B cell (primary cell): ENCODE measurements at regions of chr14 and their contacts with region 1.

Region 1: GRCh38 chr14:71328183-71328582 is 420.9 kb downstream of the PCNX1 start:
- DNase-seq: peak; percentile 65
- ATAC-seq: peak; percentile 39
- H3K4me3 ChIP-seq: no peak overlapping the region
- H3K4me3 Mint-ChIP-seq: peak overlapping the region; percentile 38
- H3K27ac ChIP-seq: peak overlapping the region in 1 of 2 donors; percentile 35
- H3K27ac Mint-ChIP-seq: peak overlapping the region; percentile 8
- H3K4me1 ChIP-seq: peaks cover 60 to 69% of the 10 kb centered on the region in 2 donors
- H3K4me1 Mint-ChIP-seq: peaks cover 84% of the 10 kb centered on the region
- H3K27me3 ChIP-seq: no peaks in the 10 kb centered on the region
- H3K27me3 Mint-ChIP-seq: no peaks in the 10 kb centered on the region
- CTCF ChIP-seq: no peak

Region 2: DNA sequence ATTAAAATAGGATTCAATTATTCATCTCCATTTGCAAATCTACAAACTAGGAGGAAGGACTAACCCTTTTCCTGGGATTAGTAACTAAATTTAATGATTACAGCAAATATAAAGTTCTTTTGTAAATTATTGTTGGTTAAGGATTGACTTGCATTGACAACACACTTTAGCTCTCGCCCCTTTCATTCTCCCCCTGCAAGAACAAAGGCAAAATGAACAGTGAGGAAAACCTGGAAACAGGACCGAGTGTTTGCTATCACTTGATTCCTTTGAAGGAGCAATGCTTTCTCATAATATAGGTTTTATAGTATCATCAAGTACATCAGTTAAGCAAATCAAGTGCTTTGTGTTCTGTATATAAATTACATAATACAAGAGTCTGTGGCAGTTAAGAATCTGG is 961.3 kb before region 1 on chr14:
- CTCF ChIA-PET with region 1: no interaction called
- POLR2A ChIA-PET with region 1: no interaction called
- intact Hi-C with region 1: no loop called
- DNase-seq: no peak
- ATAC-seq: no peak
- H3K4me3 ChIP-seq: no peak overlapping the region
- H3K4me3 Mint-ChIP-seq: no peak overlapping the region
- H3K27ac ChIP-seq: no peak overlapping the region
- H3K27ac Mint-ChIP-seq: no peak overlapping the region
- H3K4me1 ChIP-seq: no peaks in the 10 kb centered on the region
- H3K4me1 Mint-ChIP-seq: no peaks in the 10 kb centered on the region
- H3K27me3 ChIP-seq: no peaks in the 10 kb centered on the region
- H3K27me3 Mint-ChIP-seq: peaks cover 2% of the 10 kb centered on the region
- CTCF ChIP-seq: no peak

Region 3: GRCh38 chr14:71341163-71341562 is 13.0 kb after region 1 on chr14:
- CTCF ChIA-PET with region 1: interaction called, 10 read pairs
- POLR2A ChIA-PET with region 1: interaction called, 4 read pairs
- intact Hi-C with region 1: loop called (anchors 2 kb)
- DNase-seq: no peak
- ATAC-seq: no peak
- H3K4me3 ChIP-seq: no peak overlapping the region
- H3K4me3 Mint-ChIP-seq: no peak overlapping the region
- H3K27ac ChIP-seq: no peak overlapping the region
- H3K27ac Mint-ChIP-seq: no peak overlapping the region
- H3K4me1 ChIP-seq: peaks cover 9 to 10% of the 10 kb centered on the region in 2 donors
- H3K4me1 Mint-ChIP-seq: peaks cover 74% of the 10 kb centered on the region
- H3K27me3 ChIP-seq: no peaks in the 10 kb centered on the region
- H3K27me3 Mint-ChIP-seq: no peaks in the 10 kb centered on the region
- CTCF ChIP-seq: no peak

Region 4: GRCh38 chr14:71514941-71515919 is 187.0 kb after region 1 on chr14:
- CTCF ChIA-PET with region 1: no interaction called
- POLR2A ChIA-PET with region 1: no interaction called
- intact Hi-C with region 1: no loop called
- DNase-seq: no peak
- ATAC-seq: no peak
- H3K4me3 ChIP-seq: no peak overlapping the region
- H3K4me3 Mint-ChIP-seq: no peak overlapping the region
- H3K27ac ChIP-seq: no peak overlapping the region
- H3K27ac Mint-ChIP-seq: no peak overlapping the region
- H3K4me1 ChIP-seq: no peaks in the 10 kb centered on the region
- H3K4me1 Mint-ChIP-seq: no peaks in the 10 kb centered on the region
- H3K27me3 ChIP-seq: no peaks in the 10 kb centered on the region
- H3K27me3 Mint-ChIP-seq: no peaks in the 10 kb centered on the region
- CTCF ChIP-seq: no peak